ENCODE measurements at regions of chr9 and their contacts with region 1.

Region 1: DNA sequence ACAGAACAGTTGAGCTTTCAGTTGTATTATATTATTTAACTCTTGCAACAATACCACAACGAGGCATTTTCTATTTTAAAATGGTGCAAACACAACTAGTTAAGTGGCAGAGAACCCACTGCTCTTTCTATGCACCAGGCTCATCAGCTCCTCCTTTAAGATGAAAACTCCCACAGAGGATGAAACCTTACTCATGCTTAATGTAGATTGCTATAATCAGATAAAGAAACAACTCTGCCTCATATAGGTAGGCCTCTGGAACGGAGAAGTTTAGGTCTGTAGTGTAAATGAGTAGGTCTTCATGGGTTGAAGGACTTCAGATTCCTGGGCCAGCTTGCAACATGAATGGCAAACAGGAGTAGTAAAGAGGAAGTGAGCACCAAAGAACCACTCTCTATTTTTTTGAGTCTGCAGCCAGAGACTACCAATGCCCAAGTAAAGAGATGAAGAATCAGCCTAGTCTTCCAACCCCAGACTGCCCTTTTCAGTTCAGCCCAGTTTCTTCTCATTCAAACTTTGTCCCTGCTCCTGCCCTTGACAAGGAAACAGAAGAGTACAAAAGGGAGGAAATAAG is 33.9 kb downstream of the HACD4 start:
- DNase-seq: peak; percentile 47
- ATAC-seq: peak; percentile 85
- H3K4me3 ChIP-seq: no peak overlapping the region
- H3K27ac ChIP-seq: peak overlapping the region; percentile 57
- H3K4me1 ChIP-seq: peaks cover 18% of the 10 kb centered on the region
- H3K27me3 ChIP-seq: no peaks in the 10 kb centered on the region
- CTCF ChIP-seq: no peak
- EP300 ChIP-seq: no peak
- POLR2A ChIP-seq: no peak
- RAD21 ChIP-seq: no peak

Region 2: DNA sequence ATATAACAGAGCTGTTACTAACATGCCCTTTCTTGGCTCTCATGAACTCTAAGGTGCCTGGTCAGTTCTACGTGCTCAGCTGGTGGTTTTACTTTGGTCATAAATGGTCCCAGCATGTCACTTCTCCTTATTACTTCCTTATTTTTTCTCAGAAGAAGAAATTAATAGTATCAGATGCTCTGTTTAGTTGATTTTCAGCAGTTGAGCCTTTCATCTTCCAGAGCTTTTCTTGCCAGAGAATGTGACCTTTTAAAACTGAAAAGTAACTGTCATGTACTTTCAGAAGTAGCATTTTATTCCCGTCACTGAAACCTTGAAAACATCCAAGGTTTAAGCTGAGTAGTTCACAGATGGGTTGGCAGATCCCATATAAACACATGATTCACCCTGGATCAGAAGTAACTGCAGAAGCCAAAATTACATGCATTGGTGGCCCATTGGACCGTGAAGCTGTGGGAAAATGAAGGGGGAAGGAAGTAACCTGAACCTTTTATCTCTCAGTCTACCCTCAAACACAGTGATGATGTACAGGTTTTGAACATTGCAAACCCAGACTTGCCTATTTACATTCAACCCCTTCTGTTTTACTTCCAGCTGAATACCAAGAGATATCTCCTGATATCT is 16.6 kb before region 1 on chr9:
- CTCF ChIA-PET with region 1: interaction called, 4 read pairs
- POLR2A ChIA-PET with region 1: interaction called, 5 read pairs
- RAD21 ChIA-PET with region 1: interaction called, 14 read pairs
- SMC1A ChIA-PET with region 1: interaction called, 17 read pairs
- in situ Hi-C with region 1: no loop called
- intact Hi-C with region 1: no loop called
- DNase-seq: peak; percentile 33
- ATAC-seq: peak; percentile 93
- H3K4me3 ChIP-seq: no peak overlapping the region
- H3K27ac ChIP-seq: peak overlapping the region; percentile 83
- H3K4me1 ChIP-seq: peaks cover 10% of the 10 kb centered on the region
- H3K27me3 ChIP-seq: no peaks in the 10 kb centered on the region
- CTCF ChIP-seq: no peak
- EP300 ChIP-seq: 0 out of 4 replicates have a peak, but pooled peaks of 1 of the 2 experiments have one; percentile 39
- POLR2A ChIP-seq: no peak
- RAD21 ChIP-seq: no peak

Region 3: GRCh38 chr9:21031091-21031807 is 33.7 kb after region 1 on chr9 and contains the start of gene HACD4:
- CTCF ChIA-PET with region 1: interaction called, 5 read pairs
- POLR2A ChIA-PET with region 1: interaction called, 7 read pairs
- RAD21 ChIA-PET with region 1: interaction called, 7 read pairs
- SMC1A ChIA-PET with region 1: interaction called, 14 read pairs
- in situ Hi-C with region 1: no loop called
- intact Hi-C with region 1: loop called (anchors 2 kb)
- DNase-seq: peak; percentile 27
- ATAC-seq: peak; percentile 90
- H3K4me3 ChIP-seq: peak within 1 kb of the TSS; percentile 81
- H3K27ac ChIP-seq: peak within 1 kb of the TSS; percentile 62
- H3K4me1 ChIP-seq: peaks cover 5% of the 10 kb centered on the region
- H3K27me3 ChIP-seq: no peaks in the 10 kb centered on the region
- CTCF ChIP-seq: no peak
- EP300 ChIP-seq: no peak
- POLR2A ChIP-seq: peak; percentile 75
- RAD21 ChIP-seq: no peak
- polyA plus RNA-seq, gene HACD4: 3.2 to 3.3 TPM